Ovary (tissue), 10 donors: ENCODE measurements at regions of chr18 and their contacts with region 1.

Region 1: GRCh38 chr18:36688020-36688965 is 140.5 kb downstream of the TPGS2 start:
- DNase-seq: peak; percentile 26 to 66 (median 54)
- H3K4me3 ChIP-seq: no peak overlapping the region
- H3K27ac ChIP-seq: no peak overlapping the region
- H3K4me1 ChIP-seq: no peaks in the 10 kb centered on the region
- H3K27me3 ChIP-seq: no peaks in the 10 kb centered on the region
- CTCF ChIP-seq: peak; percentile 21 to 44 (median 44)
- EP300 ChIP-seq: no peak
- POLR2A ChIP-seq: no peak

Region 2: DNA sequence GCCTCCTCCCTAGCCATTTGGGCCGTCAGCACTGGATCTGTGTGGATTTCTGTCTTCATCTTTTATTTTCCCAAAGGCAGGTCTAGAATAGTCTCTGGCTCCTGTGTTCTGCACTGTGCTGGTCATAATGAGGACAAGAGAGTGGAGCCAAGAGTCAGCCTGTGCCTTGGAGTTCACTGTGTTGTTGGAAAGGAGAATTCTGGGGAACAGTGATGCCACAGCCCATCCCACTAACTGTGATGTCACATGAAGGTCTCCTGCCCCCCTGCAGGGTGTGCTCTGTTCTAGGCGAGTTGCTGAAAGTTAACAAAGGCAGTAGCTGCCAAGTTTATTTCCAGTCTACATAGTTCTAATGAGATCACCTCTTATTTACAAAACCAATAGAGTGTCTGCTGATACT is 108.0 kb before region 1 on chr18:
- intact Hi-C with region 1: no loop called
- DNase-seq: peak; percentile 42 to 71 (median 54)
- H3K4me3 ChIP-seq: no peak overlapping the region
- H3K27ac ChIP-seq: peak overlapping the region; percentile 49 to 79
- H3K4me1 ChIP-seq: peaks cover 9% of the 10 kb centered on the region
- H3K27me3 ChIP-seq: no peaks in the 10 kb centered on the region
- CTCF ChIP-seq: no peak
- EP300 ChIP-seq: no peak
- POLR2A ChIP-seq: no peak

Region 3: DNA sequence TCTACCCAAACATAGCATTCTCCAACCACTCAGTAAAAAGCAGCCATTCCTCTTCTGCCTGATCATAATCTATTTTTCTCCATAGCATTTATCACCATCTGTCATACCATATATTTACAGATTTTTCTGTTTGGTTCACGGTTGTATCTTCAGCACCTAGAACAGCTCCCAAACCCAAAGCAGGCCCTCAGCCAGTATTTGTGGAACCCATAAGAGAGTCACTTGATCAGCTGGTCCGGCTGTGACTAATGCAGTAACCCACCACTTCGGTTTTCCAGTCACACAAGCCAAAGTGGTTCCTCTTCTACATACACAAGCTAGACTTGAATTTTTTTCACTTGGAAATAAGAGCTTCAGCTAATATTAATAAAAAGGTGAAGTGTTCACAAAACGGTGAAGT is 1388.9 kb after region 1 on chr18:
- intact Hi-C with region 1: loop called in 1 of 4 experiments (anchors 10 kb)
- DNase-seq: no peak
- H3K4me3 ChIP-seq: no peak overlapping the region
- H3K27ac ChIP-seq: no peak overlapping the region
- H3K4me1 ChIP-seq: no peaks in the 10 kb centered on the region
- H3K27me3 ChIP-seq: no peaks in the 10 kb centered on the region
- CTCF ChIP-seq: no peak
- EP300 ChIP-seq: no peak
- POLR2A ChIP-seq: no peak